ENCODE measurements at regions of chr4 and their contacts with region 1.

Region 1: GRCh38 chr4:1856042-1856788 is at the start of gene LETM1:
- H3K4me3 Mint-ChIP-seq: peak within 1 kb of the TSS; percentile 80
- H3K27ac Mint-ChIP-seq: peak within 1 kb of the TSS; percentile 79
- H3K4me1 Mint-ChIP-seq: peaks cover 49% of the 10 kb centered on the region
- H3K27me3 Mint-ChIP-seq: peaks cover 1% of the 10 kb centered on the region

Region 2: GRCh38 chr4:1870578-1871443 is 14.6 kb after region 1 on chr4 and contains the start of gene NSD2:
- intact Hi-C with region 1: loop called (anchors 2 kb)
- H3K4me3 Mint-ChIP-seq: peak within 1 kb of the TSS; percentile 78
- H3K27ac Mint-ChIP-seq: peak within 1 kb of the TSS; percentile 88
- H3K4me1 Mint-ChIP-seq: peaks cover 29% of the 10 kb centered on the region
- H3K27me3 Mint-ChIP-seq: peaks cover 21% of the 10 kb centered on the region

Region 3: DNA sequence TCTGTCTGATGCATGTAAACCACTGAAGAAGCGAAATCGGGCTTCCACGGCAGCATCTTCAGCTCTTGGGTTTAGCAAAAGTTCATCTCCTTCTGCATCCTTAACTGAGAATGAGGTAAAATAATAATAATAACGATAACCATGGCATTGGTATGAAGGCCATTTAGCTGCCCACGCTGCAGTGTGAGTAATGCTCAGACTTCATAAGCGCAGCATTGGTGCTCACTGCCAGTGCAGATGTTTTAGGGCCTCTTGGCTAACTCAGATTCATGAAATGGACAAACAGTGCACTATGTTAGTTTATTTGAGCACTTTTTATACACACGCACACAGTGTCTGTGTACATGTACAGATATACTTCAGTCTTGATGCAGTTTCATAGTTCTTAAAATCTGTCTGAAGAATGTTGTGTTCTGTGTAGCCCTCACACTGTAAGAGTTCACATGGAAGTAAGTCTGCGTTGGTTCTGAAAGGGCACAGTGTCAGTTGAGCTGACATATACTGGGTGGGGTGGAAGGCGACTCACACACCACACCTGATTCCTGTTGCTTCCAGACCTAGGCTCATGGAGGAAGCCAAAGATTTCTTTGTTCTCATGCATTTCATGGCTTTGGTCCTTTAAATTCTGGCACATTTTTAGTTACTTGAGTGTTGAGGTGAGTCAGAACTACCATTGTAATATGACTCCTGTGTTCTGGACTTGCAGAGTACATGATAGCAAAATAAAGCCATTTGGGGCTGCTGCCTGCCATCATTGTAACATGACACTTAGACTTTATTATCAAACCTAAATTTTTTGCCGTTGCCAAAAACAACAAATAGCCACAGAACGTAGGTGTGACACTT is 83.7 kb after region 1 on chr4:
- intact Hi-C with region 1: no loop called
- H3K4me3 Mint-ChIP-seq: no peak overlapping the region
- H3K27ac Mint-ChIP-seq: no peak overlapping the region
- H3K4me1 Mint-ChIP-seq: no peaks in the 10 kb centered on the region
- H3K27me3 Mint-ChIP-seq: no peaks in the 10 kb centered on the region

Region 4: GRCh38 chr4:3136453-3136852 is 1280.2 kb after region 1 on chr4:
- intact Hi-C with region 1: no loop called
- H3K4me3 Mint-ChIP-seq: no peak overlapping the region
- H3K27ac Mint-ChIP-seq: no peak overlapping the region
- H3K4me1 Mint-ChIP-seq: peaks cover 2% of the 10 kb centered on the region
- H3K27me3 Mint-ChIP-seq: no peaks in the 10 kb centered on the region